Dorsolateral prefrontal cortex (tissue), 120 donors: ENCODE measurements at regions of chr19 and their contacts with region 1.

Region 1: GRCh38 chr19:6048808-6049405 is 61.4 kb downstream of the RFX2 start:
- DNase-seq: peak; percentile 56 to 78 (median 68)
- H3K4me3 ChIP-seq: peak overlapping the region in 9 of 59 donors; percentile 4 to 25 (median 16)
- H3K27ac ChIP-seq: no peak overlapping the region
- H3K27me3 ChIP-seq: no peaks in the 10 kb centered on the region
- CTCF ChIP-seq: peak; percentile 65 to 94 (median 86)

Region 2: GRCh38 chr19:5690125-5690954 is 358.6 kb before region 1 on chr19 and contains the start of gene RPL36:
- intact Hi-C with region 1: no loop called
- DNase-seq: peak; percentile 92 to 97 (median 95)
- H3K4me3 ChIP-seq: peak within 1 kb of the TSS; percentile 59 to 92 (median 77)
- H3K27ac ChIP-seq: peak within 1 kb of the TSS; percentile 27 to 95 (median 86)
- H3K27me3 ChIP-seq: no peaks in the 10 kb centered on the region
- CTCF ChIP-seq: peak; percentile 90 to 99 (median 97)
- total RNA-seq, gene RPL36: 215 to 431 (median 280) TPM

Region 3: DNA sequence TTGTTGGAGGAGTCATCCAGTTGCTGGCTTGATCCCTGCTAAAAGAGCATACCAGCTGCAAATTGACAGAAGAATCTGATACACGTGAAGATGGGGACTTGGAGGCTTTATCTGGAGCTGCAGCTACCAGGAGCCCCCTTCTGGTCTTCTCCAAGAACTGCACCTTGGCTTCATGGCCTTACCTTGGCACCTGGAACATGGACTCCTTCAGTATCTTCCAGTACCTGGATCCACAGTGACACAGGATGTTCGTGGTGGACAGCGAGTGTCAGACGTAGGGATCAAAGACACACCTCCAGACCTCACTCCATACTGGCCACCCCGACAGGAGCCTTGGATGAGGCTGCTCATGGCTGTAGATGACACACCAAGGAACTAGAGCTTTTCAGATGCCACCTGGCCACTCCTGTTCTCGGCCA is 76.7 kb after region 1 on chr19:
- intact Hi-C with region 1: loop called (anchors 2 kb)
- DNase-seq: peak in 4 of 10 donors; percentile 13 to 51 (median 36)
- H3K4me3 ChIP-seq: no peak overlapping the region
- H3K27ac ChIP-seq: no peak overlapping the region
- H3K27me3 ChIP-seq: no peaks in the 10 kb centered on the region
- CTCF ChIP-seq: peak; percentile 43 to 88 (median 80)

Region 4: GRCh38 chr19:6212403-6213265 is 163.7 kb after region 1 on chr19:
- intact Hi-C with region 1: no loop called
- DNase-seq: peak in 2 of 10 donors; percentile 11 to 28
- H3K4me3 ChIP-seq: no peak overlapping the region
- H3K27ac ChIP-seq: no peak overlapping the region
- H3K27me3 ChIP-seq: no peaks in the 10 kb centered on the region
- CTCF ChIP-seq: no peak

Region 5: DNA sequence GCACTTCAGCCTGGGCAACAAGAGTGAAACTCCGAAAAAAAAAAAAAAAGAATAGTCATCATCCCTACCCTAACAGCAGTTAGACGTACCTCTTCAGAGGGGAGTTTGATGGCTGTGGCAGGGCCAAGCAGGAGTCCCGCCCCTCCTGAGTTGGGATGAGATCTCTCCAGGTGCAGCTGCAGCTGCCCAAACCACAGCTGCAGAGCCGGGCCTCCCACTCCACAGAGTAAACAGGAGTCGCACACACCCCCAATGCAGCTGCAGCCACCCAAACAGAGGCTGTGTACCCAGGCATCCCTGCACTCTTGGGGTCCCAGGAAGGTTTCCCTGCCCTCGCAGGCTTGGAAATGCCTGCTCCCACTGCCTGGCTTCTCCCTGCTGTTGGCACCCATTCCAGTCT is 248.3 kb after region 1 on chr19:
- intact Hi-C with region 1: loop called in 1 of 2 experiments (anchors 2 kb)
- DNase-seq: no peak
- H3K4me3 ChIP-seq: no peak overlapping the region
- H3K27ac ChIP-seq: no peak overlapping the region
- H3K27me3 ChIP-seq: peaks cover 0 to 4% (median 0%) of the 10 kb centered on the region in 45 donors
- CTCF ChIP-seq: no peak

Region 6: DNA sequence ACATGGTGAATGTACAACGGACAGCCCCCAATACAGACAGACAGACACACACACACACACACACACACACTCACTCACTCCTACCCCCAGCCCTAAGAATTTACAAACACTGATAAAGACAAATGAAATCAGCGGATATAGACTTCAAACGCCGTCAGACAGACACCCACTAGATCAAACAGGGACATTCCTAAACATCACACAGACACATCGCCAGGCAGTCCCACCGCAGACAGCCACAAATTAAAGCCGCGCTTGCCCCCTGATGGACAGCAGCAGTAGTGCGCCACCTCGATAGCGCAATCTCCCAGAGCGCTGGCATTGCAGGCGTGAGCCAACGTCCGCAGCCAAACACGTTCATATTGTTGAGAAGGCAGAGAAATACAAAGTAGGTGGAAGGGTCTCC is 813.8 kb after region 1 on chr19:
- intact Hi-C with region 1: loop called in 1 of 2 experiments (anchors 10 kb)
- DNase-seq: peak; percentile 19 to 83 (median 78)
- H3K4me3 ChIP-seq: peak overlapping the region in 48 of 59 donors; percentile 7 to 57 (median 37)
- H3K27ac ChIP-seq: no peak overlapping the region
- H3K27me3 ChIP-seq: peaks cover 0 to 7% (median 0%) of the 10 kb centered on the region in 45 donors
- CTCF ChIP-seq: peak; percentile 55 to 91 (median 81)